ENCODE measurements at regions of chr4 and their contacts with region 1.

Region 1: DNA sequence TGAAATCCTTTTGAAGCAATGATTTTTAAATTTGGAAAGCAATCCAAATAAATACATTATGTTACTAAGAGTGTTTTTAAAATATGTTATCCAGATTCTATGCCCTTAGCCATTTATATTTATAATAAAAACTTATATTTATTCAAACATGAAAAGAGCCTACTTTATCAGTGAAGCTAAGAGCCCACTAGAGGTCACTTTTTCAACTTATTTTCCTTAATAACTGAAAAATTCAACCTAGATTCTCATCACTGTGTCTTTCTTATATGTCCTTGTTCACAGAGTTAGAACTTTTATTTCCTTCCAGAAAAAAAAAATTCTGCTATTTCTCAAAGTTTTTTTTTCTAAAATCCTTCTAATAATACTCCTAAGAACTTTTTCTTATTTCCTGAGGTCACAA is 23.9 kb downstream of the PRDM8 start:
- DNase-seq: peak; percentile 55
- ATAC-seq: no peak
- H3K4me3 ChIP-seq: no peak overlapping the region
- H3K27ac ChIP-seq: no peak overlapping the region
- H3K4me1 ChIP-seq: peaks cover 25% of the 10 kb centered on the region
- H3K27me3 ChIP-seq: no peaks in the 10 kb centered on the region
- CTCF ChIP-seq: peak; percentile 45

Region 2: DNA sequence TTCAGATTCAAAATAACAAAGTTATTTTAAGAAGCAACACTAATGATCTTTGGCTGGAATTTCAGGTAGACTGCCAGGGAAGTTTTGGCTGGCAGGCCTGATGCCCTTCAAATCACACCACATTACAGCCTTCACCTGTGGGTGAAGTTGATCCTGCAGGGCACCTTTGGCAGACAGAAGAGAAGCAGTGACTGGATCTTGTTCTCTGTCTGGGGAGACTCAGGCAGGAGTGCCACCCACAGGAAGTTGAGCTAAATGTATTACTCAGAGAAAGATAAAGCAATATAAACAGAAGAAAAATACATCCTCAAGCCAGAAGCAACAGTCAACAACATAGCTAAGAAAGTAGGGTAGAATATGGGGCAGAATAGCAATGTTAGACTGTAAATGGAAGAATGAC is 101.6 kb after region 1 on chr4:
- CTCF ChIA-PET with region 1: interaction called, 16 read pairs
- POLR2A ChIA-PET with region 1: no interaction called
- intact Hi-C with region 1: loop called (anchors 2 kb)
- DNase-seq: peak; percentile 68
- ATAC-seq: peak; percentile 99
- H3K4me3 ChIP-seq: no peak overlapping the region
- H3K27ac ChIP-seq: no peak overlapping the region
- H3K4me1 ChIP-seq: peaks cover 13% of the 10 kb centered on the region
- H3K27me3 ChIP-seq: no peaks in the 10 kb centered on the region
- CTCF ChIP-seq: peak; percentile 63

Region 3: DNA sequence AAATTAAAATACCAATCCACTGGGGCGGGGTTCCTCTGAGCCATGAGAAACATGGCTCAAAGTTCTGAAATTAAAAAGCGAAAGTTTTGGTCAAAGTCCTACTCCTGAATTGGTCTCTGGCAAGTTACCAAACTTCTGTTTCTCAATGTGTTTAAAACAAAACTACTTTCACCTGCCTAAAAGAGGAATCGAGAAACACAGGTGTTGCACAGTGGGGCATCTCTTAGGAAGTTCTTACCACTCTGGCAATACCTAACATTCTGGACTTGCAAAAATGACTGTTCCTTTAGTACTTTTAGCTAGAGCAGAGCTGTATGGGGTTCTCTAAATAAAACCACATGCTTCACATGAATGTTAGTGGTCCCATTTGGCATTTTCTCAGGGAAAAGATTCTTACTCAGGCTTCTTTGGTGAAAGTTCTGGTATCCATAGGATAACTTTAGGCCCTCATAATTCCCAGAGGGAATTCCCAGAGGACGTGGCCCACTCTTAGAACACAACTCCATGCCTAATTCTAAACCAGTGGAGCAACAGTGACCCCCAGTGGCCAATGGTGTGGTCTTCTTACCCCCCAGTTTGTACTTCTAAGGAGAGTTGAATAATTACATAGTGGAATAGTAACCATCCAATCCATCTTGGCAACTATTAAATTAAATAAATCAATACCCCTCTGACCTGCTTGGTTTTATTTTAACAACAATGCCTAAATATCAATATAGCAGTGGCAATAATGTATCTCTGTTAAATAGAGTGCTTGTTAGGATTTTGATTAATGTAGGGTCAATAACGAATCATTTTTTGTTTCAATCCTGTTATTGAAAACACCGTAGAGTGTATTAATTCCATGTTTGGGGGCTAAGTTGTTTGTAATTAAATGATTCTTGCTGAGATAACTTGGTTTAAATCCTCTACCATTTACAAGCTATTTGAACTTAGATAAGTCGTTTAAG is 831.2 kb after region 1 on chr4:
- CTCF ChIA-PET with region 1: no interaction called
- POLR2A ChIA-PET with region 1: no interaction called
- intact Hi-C with region 1: loop called (anchors 5 kb)
- DNase-seq: peak; percentile 74
- ATAC-seq: peak; percentile 81
- H3K4me3 ChIP-seq: no peak overlapping the region
- H3K27ac ChIP-seq: no peak overlapping the region
- H3K4me1 ChIP-seq: no peaks in the 10 kb centered on the region
- H3K27me3 ChIP-seq: no peaks in the 10 kb centered on the region
- CTCF ChIP-seq: peak; percentile 80